CD4-positive, alpha-beta memory T cell (primary cell): ENCODE measurements at regions of chr1 and their contacts with region 1.

Region 1: GRCh38 chr1:50873458-50874187 is 86.4 kb downstream of the FAF1 start:
- DNase-seq: peak; percentile 51 to 72 (median 67)
- H3K4me3 ChIP-seq: peak overlapping the region in 1 of 2 donors; percentile 11
- H3K4me3 Mint-ChIP-seq: peak overlapping the region; percentile 56 to 86 (median 65)
- H3K27ac ChIP-seq: no peak overlapping the region
- H3K27ac Mint-ChIP-seq: peak overlapping the region in 2 of 7 donors; percentile 10 to 44
- H3K4me1 ChIP-seq: no peaks in the 10 kb centered on the region
- H3K4me1 Mint-ChIP-seq: peaks cover 4 to 19% (median 11%) of the 10 kb centered on the region in 4 donors
- H3K27me3 ChIP-seq: no peaks in the 10 kb centered on the region
- H3K27me3 Mint-ChIP-seq: no peaks in the 10 kb centered on the region

Region 2: GRCh38 chr1:50796272-50796671 is 77.4 kb before region 1 on chr1:
- CTCF ChIA-PET with region 1: no interaction called
- POLR2A ChIA-PET with region 1: no interaction called
- intact Hi-C with region 1: no loop called
- DNase-seq: no peak
- H3K4me3 ChIP-seq: no peak overlapping the region
- H3K4me3 Mint-ChIP-seq: no peak overlapping the region
- H3K27ac ChIP-seq: no peak overlapping the region
- H3K27ac Mint-ChIP-seq: peak overlapping the region in 1 of 7 donors; percentile 58
- H3K4me1 ChIP-seq: no peaks in the 10 kb centered on the region
- H3K4me1 Mint-ChIP-seq: peaks cover 4 to 21% (median 9%) of the 10 kb centered on the region in 4 donors
- H3K27me3 ChIP-seq: no peaks in the 10 kb centered on the region
- H3K27me3 Mint-ChIP-seq: no peaks in the 10 kb centered on the region

Region 3: DNA sequence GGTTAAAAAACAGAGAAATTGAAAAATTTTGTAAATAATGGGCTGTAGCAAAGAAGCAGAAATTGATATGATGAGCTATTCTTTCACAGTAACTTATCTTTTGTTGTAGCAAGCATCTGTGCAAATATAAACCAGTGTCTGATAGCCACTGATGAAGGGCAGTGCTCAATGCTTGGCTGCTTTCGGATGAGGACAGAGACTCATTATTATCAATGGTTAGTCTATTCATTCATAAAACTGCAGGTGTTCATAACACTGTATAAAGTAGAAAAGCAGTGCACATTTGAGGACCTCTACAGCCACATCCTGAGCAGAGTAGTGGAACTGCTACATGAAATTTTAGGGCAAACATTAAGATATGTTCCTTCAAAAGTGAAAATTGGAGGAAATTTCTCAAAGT is 20.7 kb before region 1 on chr1:
- CTCF ChIA-PET with region 1: interaction called, 14 read pairs
- POLR2A ChIA-PET with region 1: no interaction called
- intact Hi-C with region 1: no loop called
- DNase-seq: no peak
- H3K4me3 ChIP-seq: no peak overlapping the region
- H3K4me3 Mint-ChIP-seq: no peak overlapping the region
- H3K27ac ChIP-seq: no peak overlapping the region
- H3K27ac Mint-ChIP-seq: no peak overlapping the region
- H3K4me1 ChIP-seq: no peaks in the 10 kb centered on the region
- H3K4me1 Mint-ChIP-seq: peaks cover 17 to 34% (median 23%) of the 10 kb centered on the region in 4 donors
- H3K27me3 ChIP-seq: no peaks in the 10 kb centered on the region
- H3K27me3 Mint-ChIP-seq: no peaks in the 10 kb centered on the region

Region 4: DNA sequence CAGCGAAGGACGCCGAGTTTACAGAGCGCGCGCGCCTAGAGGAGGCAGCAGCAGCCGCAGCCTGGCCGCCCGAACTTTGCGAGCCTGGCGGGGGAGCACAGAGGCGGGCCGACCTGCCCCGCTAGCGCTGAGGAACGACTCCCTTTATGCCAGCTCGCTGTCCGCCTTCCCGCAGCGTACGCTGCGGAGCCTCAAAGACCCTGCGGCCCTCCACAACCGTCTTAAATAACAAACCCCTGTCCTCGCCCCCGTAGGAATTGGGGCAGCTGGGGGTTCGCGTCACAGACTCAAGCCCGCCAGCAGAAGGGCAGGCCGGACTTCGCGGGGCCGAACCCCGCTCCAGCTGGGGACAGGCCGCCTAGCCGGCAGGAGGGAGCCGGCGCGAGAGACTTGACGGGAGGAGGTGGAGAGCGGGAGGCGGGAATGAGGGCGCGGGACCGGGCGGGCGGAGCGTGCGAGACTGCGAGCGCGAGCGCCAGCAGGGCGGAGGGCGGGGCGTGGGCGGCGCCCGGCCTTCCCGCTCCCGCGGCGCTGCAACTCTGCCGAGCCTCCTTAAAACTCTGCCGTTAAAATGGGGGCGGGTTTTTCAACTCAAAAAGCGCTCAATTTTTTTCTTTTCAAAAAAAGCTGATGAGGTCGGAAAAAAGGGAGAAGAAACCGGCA is 94.7 kb after region 1 on chr1:
- CTCF ChIA-PET with region 1: interaction called, 4 read pairs
- POLR2A ChIA-PET with region 1: no interaction called
- intact Hi-C with region 1: loop called (anchors 5 kb)
- DNase-seq: peak; percentile 85 to 87 (median 87)
- H3K4me3 ChIP-seq: peak overlapping the region; percentile 62 to 91
- H3K4me3 Mint-ChIP-seq: peak overlapping the region; percentile 93 to 100 (median 98)
- H3K27ac ChIP-seq: peak overlapping the region; percentile 76
- H3K27ac Mint-ChIP-seq: peak overlapping the region; percentile 90 to 97 (median 96)
- H3K4me1 ChIP-seq: peaks cover 31% of the 10 kb centered on the region
- H3K4me1 Mint-ChIP-seq: peaks cover 9 to 30% (median 23%) of the 10 kb centered on the region in 4 donors
- H3K27me3 ChIP-seq: no peaks in the 10 kb centered on the region
- H3K27me3 Mint-ChIP-seq: no peaks in the 10 kb centered on the region

Region 5: GRCh38 chr1:51058858-51059257 is 185.2 kb after region 1 on chr1:
- CTCF ChIA-PET with region 1: interaction called, 5 read pairs
- POLR2A ChIA-PET with region 1: no interaction called
- intact Hi-C with region 1: loop called (anchors 1 kb)
- DNase-seq: peak in 2 of 5 donors; percentile 2 to 20
- H3K4me3 ChIP-seq: no peak overlapping the region
- H3K4me3 Mint-ChIP-seq: no peak overlapping the region
- H3K27ac ChIP-seq: no peak overlapping the region
- H3K27ac Mint-ChIP-seq: no peak overlapping the region
- H3K4me1 ChIP-seq: no peaks in the 10 kb centered on the region
- H3K4me1 Mint-ChIP-seq: no peaks in the 10 kb centered on the region
- H3K27me3 ChIP-seq: peaks cover 3% of the 10 kb centered on the region
- H3K27me3 Mint-ChIP-seq: peaks cover 6 to 10% of the 10 kb centered on the region in 2 donors

Region 6: DNA sequence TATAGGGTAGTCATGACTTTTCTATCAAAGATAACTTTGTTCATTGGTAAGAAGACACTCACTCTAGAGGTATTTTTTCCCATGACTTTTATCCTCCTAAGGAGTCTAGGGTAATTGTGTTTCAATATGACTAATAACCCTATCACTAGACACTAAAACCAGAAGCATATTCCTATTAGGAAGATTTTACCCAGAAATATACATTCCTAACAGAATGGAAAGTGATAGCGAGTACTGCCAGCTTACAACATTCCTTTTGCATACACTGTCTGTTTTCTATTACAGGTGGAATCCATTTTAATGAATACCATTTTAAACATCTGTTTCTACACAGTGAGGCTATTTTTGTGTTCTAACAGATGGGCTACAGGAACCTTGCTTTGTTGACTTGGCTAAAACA is 197.0 kb after region 1 on chr1:
- CTCF ChIA-PET with region 1: no interaction called
- POLR2A ChIA-PET with region 1: no interaction called
- intact Hi-C with region 1: no loop called
- DNase-seq: no peak
- H3K4me3 ChIP-seq: no peak overlapping the region
- H3K4me3 Mint-ChIP-seq: no peak overlapping the region
- H3K27ac ChIP-seq: no peak overlapping the region
- H3K27ac Mint-ChIP-seq: no peak overlapping the region
- H3K4me1 ChIP-seq: no peaks in the 10 kb centered on the region
- H3K4me1 Mint-ChIP-seq: no peaks in the 10 kb centered on the region
- H3K27me3 ChIP-seq: no peaks in the 10 kb centered on the region
- H3K27me3 Mint-ChIP-seq: peaks cover 17% of the 10 kb centered on the region in 2 donors

Region 7: GRCh38 chr1:51192213-51192843 is 318.7 kb after region 1 on chr1:
- CTCF ChIA-PET with region 1: interaction called, 160 read pairs
- POLR2A ChIA-PET with region 1: interaction called, 3 read pairs
- intact Hi-C with region 1: loop called (anchors 1 kb)
- DNase-seq: peak in 4 of 5 donors; percentile 22 to 31 (median 29)
- H3K4me3 ChIP-seq: no peak overlapping the region
- H3K4me3 Mint-ChIP-seq: no peak overlapping the region
- H3K27ac ChIP-seq: no peak overlapping the region
- H3K27ac Mint-ChIP-seq: no peak overlapping the region
- H3K4me1 ChIP-seq: no peaks in the 10 kb centered on the region
- H3K4me1 Mint-ChIP-seq: no peaks in the 10 kb centered on the region
- H3K27me3 ChIP-seq: no peaks in the 10 kb centered on the region
- H3K27me3 Mint-ChIP-seq: peaks cover 3% of the 10 kb centered on the region in 2 donors

Region 8: GRCh38 chr1:52786148-52786547 is 1912.5 kb after region 1 on chr1:
- CTCF ChIA-PET with region 1: no interaction called
- POLR2A ChIA-PET with region 1: no interaction called
- intact Hi-C with region 1: no loop called
- DNase-seq: no peak
- H3K4me3 ChIP-seq: no peak overlapping the region
- H3K4me3 Mint-ChIP-seq: no peak overlapping the region
- H3K27ac ChIP-seq: no peak overlapping the region
- H3K27ac Mint-ChIP-seq: no peak overlapping the region
- H3K4me1 ChIP-seq: no peaks in the 10 kb centered on the region
- H3K4me1 Mint-ChIP-seq: peaks cover 0 to 2% (median 0%) of the 10 kb centered on the region in 4 donors
- H3K27me3 ChIP-seq: no peaks in the 10 kb centered on the region
- H3K27me3 Mint-ChIP-seq: no peaks in the 10 kb centered on the region